ENCODE measurements at regions of chr15 and their contacts with region 1.

Region 1: GRCh38 chr15:69509131-69509530 is 56.5 kb downstream of the RPLP1 start:
- DNase-seq: no peak
- ATAC-seq: no peak
- H3K4me3 ChIP-seq: no peak overlapping the region
- H3K27ac ChIP-seq: no peak overlapping the region
- H3K4me1 ChIP-seq: no peaks in the 10 kb centered on the region
- H3K27me3 ChIP-seq: no peaks in the 10 kb centered on the region
- CTCF ChIP-seq: no peak

Region 2: GRCh38 chr15:69493406-69493805 is 15.7 kb before region 1 on chr15:
- CTCF ChIA-PET with region 1: interaction called, 11 read pairs
- POLR2A ChIA-PET with region 1: no interaction called
- in situ Hi-C with region 1: no loop called
- intact Hi-C with region 1: no loop called
- DNase-seq: no peak
- ATAC-seq: no peak
- H3K4me3 ChIP-seq: no peak overlapping the region
- H3K27ac ChIP-seq: no peak overlapping the region
- H3K4me1 ChIP-seq: no peaks in the 10 kb centered on the region; the same call in 1 of the 2 replicates
- H3K27me3 ChIP-seq: no peaks in the 10 kb centered on the region
- CTCF ChIP-seq: no peak

Measured in Panc1 (cell line).